ENCODE measurements at regions of chr6 and their contacts with region 1.

Region 1: DNA sequence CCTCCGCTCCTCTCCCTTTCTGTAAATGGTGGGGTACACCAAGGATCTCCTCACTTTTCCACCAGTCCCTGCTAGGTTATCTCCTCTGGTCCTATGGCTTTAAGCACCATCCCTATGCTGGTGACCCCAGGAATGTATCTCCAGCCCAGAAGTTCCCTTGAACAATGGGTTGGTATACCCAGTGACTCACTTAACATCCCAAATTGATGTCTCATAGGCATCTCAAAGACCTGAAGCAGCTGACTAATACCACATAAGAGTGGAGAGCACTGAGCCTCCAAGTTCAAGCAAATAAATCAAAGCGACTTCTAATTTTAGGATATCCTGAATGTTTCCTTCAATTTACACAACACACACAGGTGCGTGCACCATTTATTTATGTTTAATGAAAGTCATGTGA is 48.3 kb downstream of the ADGRF1 start:
- DNase-seq: no peak

Region 2: DNA sequence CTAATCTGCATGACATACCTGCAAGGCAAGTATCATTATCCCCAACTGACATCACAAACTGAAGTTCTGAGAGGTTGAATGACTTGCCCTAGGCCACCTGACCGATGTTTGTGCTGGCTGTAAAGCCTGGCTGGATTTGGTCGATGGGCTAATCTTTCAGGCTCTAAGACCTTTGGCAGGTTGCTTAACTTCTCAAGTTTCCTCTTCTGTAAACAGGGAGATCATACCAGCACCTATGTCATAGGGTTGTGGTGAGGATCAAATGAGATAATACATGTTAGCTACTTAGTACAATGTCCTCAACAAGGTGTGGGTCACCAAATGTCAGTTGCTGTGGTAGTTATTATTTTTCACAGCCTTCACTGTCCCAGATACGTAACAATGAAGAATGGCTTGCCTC is 232.9 kb before region 1 on chr6:
- intact Hi-C with region 1: no loop called
- DNase-seq: no peak

Region 3: GRCh38 chr6:46954837-46955451 is 38.9 kb before region 1 on chr6:
- intact Hi-C with region 1: loop called (anchors 5 kb)
- DNase-seq: no peak

Region 4: DNA sequence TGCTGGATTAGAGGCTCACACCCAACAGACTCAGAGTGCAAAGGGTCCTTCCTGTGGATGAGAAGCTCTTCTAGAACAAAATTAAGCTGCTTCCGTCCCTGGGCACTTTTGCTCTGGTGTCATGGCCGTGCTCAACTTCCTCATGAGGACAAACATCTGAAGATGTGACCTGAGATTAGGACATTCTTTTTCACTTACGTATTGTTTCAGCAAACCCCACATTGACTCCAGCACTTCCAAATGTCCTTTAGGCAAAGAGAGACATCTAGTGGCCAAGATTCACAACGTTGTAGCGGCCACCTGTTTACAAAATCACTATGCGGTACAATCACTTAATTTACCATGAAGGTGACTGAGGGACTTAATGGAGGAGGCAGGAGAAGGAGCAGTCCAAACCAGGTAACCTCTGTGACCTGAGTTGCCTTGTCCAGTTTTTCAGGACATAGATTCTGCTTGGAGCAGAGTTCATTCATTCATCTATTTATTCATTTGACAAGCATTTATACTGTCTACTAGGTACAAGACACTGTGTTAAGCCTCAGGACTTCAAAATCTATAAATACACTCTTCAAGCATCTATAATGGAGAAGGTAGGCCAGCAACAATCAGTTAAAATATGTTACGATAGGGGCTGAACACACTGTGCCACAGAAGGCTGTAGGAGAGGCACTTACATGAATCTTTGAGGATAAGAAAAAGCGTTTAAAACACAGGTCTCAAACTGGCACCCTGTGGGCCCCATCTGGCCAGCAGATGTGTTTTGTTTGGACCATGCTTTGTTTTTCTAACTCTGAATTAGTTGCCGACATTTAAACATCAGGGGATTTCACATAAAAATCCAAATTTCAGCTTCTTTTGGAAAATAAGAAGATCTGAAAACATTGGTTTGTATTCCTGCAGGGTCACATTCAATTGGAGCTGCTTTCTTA is 53.9 kb after region 1 on chr6:
- intact Hi-C with region 1: loop called (anchors 5 kb)
- DNase-seq: no peak

Region 5: DNA sequence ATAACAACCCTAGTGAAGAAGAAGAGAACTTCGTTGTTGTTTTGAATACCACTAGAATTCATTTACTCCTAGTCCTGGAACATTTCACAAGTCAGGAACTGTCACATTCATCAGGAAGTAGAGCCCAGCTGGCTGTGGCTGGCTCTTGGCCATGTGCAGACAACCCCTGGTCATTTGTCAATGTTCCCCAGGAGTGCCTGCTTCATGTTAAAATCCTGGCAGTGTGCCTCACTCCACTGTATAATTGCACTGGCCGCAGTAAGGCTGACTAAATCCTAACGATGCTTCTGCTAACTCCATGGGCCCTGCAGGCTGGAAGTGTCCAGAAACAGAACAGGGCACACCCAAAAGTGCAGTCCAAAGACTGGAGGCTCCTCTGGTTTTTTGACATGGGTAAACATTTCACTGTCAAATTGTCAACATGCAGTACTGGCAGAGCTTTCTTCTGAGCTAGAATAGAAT is 89.8 kb after region 1 on chr6:
- intact Hi-C with region 1: no loop called
- DNase-seq: peak; percentile 89

Region 6: DNA sequence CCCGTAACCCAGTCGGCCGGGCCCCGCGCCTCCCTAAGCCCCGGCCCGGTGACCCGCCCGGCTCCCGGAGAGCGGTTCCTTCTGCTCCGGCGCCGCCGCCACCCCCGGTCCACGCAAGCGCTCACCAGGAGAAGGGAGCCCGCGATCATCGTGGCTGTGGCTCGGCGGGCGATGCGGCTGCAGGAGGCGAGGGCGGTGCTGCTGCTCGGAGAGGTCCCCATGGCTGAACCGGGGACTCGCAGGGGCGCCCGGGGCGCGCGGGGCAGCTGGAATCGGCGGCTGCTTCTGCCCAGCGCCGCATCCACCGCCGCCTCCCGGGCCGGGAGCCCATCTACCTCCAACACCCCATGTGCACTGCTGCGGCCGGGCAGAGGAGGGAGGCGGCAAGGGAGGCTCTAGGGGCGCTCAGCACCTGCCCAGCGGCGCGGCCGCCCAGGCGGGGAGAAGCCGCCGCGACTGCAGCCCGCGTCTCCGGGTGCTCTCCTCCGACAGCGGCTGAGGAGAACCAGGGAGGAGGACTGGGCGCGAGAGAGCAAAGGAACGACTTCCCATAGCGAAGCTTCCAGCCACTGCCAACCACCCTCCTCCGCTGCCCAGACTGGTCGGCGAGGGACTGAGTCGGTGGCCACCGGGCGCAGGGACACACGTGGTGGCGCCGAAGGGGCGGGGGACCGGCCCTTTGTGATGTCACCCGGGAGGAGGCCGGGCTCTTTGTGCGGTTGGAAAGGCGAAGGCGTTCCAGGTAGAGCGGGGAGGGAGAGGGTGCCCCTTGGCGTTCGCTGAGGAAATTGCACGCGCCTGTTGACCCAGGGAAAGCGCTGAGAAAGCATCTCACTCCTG is 315.7 kb after region 1 on chr6 and contains the start of gene TNFRSF21:
- intact Hi-C with region 1: no loop called
- DNase-seq: peak; percentile 93
- total RNA-seq, gene TNFRSF21: 3.5 TPM

Region 7: GRCh38 chr6:48111143-48111506 is 1117.3 kb after region 1 on chr6 and contains the start of gene PTCHD4:
- intact Hi-C with region 1: no loop called
- DNase-seq: no peak
- total RNA-seq, gene PTCHD4: 1.1 TPM